ENCODE measurements at regions of chr12 and their contacts with region 1.

Region 1: DNA sequence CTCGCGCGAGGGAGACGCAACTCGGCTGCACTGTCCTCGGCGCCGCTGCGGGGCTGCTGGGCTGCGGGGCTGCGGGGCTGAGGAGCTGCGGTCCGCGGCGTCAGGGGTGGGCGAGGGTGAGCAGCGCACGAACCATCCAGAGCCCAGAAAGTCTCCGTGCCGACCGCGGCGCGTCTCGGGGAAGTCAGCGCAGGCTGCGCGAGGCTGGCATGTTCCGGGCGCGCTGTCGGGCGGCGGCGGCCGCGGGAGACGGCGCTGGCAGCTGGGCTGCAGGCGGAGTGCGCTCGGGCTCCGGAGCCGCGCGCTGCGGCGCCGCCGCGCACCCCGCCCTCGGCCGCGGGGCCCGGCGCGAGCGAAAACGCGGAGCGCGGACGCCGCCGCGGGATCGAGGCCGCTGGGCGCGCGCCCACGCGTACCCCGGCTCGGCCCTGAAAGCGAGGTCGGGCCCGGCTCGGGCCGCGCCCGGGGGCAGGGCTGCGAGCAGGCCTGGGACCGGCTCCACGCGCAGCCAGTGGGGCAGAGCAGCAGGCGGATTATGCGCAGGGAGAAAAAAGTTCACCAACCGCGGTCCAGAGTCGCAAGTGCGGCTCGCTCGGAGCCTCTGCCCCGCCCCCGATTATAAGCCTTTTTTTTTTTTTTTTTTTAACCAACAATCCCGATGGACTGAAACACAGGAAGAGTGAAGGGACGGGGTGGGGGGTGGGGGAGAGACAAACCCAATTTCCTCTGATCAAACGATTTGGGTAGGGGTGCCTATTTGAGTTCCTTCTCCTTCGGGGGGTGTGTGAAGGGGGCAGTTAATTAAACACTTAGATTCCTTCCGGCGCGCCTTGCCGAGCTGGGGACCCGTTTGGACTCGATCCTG is at the start of gene PRICKLE1:
- DNase-seq: peak; percentile 38 to 54
- ATAC-seq: peak; percentile 48 to 90 (median 74)
- H3K4me3 ChIP-seq: peak within 1 kb of the TSS; percentile 68 to 99 (median 96)
- H3K27ac ChIP-seq: peak within 1 kb of the TSS; percentile 68 to 94 (median 83)
- H3K4me1 ChIP-seq: peaks cover 0 to 52% (median 39%) of the 10 kb centered on the region in 9 donors
- H3K27me3 ChIP-seq: peaks cover 0 to 49% (median 0%) of the 10 kb centered on the region in 7 donors
- CTCF ChIP-seq: no peak
- total RNA-seq, gene PRICKLE1: 12.9 to 36.9 (median 18.4) TPM

Region 2: GRCh38 chr12:42144408-42145196 is 445.1 kb before region 1 on chr12 and contains the start of gene GXYLT1:
- intact Hi-C with region 1: loop called in 1 of 10 experiments (anchors 10 kb)
- DNase-seq: peak; percentile 93 to 95
- ATAC-seq: peak; percentile 98 to 100 (median 99)
- H3K4me3 ChIP-seq: peak within 1 kb of the TSS; percentile 49 to 87 (median 76)
- H3K27ac ChIP-seq: peak within 1 kb of the TSS; percentile 55 to 91 (median 88)
- H3K4me1 ChIP-seq: peaks cover 0 to 40% (median 29%) of the 10 kb centered on the region in 9 donors
- H3K27me3 ChIP-seq: no peaks in the 10 kb centered on the region
- CTCF ChIP-seq: peak in 2 of 9 donors; percentile 13 to 17
- total RNA-seq, gene GXYLT1: 4.2 to 7.8 (median 5.7) TPM

Region 3: GRCh38 chr12:42564556-42564955 is 25.1 kb before region 1 on chr12:
- intact Hi-C with region 1: no loop called
- DNase-seq: no peak
- ATAC-seq: no peak
- H3K4me3 ChIP-seq: no peak overlapping the region
- H3K27ac ChIP-seq: no peak overlapping the region
- H3K4me1 ChIP-seq: peaks cover 0 to 62% (median 21%) of the 10 kb centered on the region in 9 donors
- H3K27me3 ChIP-seq: no peaks in the 10 kb centered on the region
- CTCF ChIP-seq: no peak

Region 4: DNA sequence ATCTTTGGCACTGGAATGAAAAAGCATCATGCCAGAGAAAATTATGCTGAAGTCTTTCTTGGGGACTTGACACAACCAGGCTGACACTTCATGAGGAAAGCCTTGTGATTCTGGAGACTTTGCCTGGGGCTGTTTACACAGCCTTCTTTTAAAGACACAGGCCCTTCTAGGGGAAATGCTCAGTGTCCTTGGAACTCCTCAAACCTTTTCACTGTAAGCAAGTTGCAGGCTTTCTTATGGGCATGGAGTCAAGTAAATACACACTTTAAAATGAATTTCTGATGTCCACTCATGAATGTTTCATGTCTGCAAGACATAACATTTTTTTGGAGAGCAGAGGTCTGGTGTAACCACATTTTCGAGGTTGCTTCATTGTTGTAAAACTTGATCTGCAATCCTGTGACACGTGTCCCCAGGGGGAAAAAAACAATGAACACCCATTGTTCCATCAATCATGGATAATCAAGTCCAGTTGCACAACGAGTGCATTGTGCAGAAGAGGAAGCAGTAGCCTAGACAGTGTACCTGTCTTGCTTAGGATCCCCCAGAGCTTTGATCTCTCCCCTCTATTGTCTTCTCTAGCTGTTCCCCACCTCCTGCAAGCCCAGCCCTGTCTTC is 155.0 kb after region 1 on chr12:
- intact Hi-C with region 1: loop called in 3 of 10 experiments (anchors 5 to 10 kb)
- DNase-seq: no peak
- ATAC-seq: peak in 4 of 8 donors; percentile 23 to 47 (median 40)
- H3K4me3 ChIP-seq: no peak overlapping the region
- H3K27ac ChIP-seq: peak overlapping the region in 6 of 10 donors; percentile 3 to 90 (median 66)
- H3K4me1 ChIP-seq: peaks cover 0 to 46% (median 25%) of the 10 kb centered on the region in 9 donors
- H3K27me3 ChIP-seq: no peaks in the 10 kb centered on the region
- CTCF ChIP-seq: no peak

Region 5: DNA sequence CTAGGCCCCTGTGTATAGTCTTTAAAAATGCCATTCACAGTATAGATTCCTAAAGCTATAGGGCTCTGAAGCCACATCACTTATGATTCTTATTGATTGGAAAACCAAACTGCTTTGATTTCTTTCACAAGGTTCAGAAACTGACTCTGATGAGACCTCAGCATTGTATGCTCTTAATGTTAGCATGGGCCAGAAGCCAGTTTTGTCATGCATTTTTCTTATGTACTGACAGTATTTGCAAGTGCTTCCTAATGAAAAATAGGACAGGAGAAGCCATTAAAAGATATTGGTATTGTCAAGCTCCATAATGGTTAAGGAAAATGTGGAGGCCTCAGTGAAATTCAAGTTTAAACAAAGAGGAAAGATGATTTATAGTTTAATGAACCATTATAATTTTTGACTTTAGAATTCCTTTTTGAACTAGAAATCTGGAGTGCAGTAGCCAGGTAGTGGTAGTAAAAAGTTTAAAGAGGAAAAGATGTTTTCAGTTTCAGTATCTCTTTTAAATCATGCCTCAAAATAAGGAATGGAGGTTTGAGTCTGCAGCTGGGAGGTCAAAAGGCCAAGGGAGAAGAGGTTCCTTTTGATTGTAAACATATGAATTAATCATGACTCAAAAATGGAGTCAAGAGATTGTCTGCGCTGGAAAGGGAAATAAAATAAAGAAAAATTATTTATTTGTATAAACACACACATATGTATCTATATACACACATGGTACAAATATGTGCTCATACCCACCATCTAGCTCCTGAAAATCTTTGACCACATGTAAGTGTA is 387.9 kb after region 1 on chr12:
- intact Hi-C with region 1: loop called in 4 of 10 experiments (anchors 5 to 10 kb)
- DNase-seq: no peak
- ATAC-seq: no peak
- H3K4me3 ChIP-seq: no peak overlapping the region
- H3K27ac ChIP-seq: peak overlapping the region in 2 of 10 donors; percentile 69 to 84
- H3K4me1 ChIP-seq: peaks cover 0 to 23% (median 5%) of the 10 kb centered on the region in 9 donors
- H3K27me3 ChIP-seq: no peaks in the 10 kb centered on the region
- CTCF ChIP-seq: no peak

Region 6: GRCh38 chr12:43282106-43282505 is 692.4 kb after region 1 on chr12:
- intact Hi-C with region 1: loop called in 9 of 10 experiments (anchors 2 to 10 kb)
- DNase-seq: no peak
- ATAC-seq: peak in 2 of 8 donors; percentile 44 to 61
- H3K4me3 ChIP-seq: no peak overlapping the region
- H3K27ac ChIP-seq: no peak overlapping the region
- H3K4me1 ChIP-seq: peaks cover 0 to 24% (median 4%) of the 10 kb centered on the region in 9 donors
- H3K27me3 ChIP-seq: no peaks in the 10 kb centered on the region
- CTCF ChIP-seq: peak in 7 of 9 donors; percentile 16 to 67 (median 61)